ENCODE measurements at regions of chr21 and their contacts with region 1.

Region 1: GRCh38 chr21:21860888-21861287 is 862.7 kb downstream of the NCAM2 start:
- DNase-seq: no peak
- H3K4me3 ChIP-seq: no peak overlapping the region
- H3K27ac ChIP-seq: no peak overlapping the region
- H3K4me1 ChIP-seq: no peaks in the 10 kb centered on the region
- H3K27me3 ChIP-seq: no peaks in the 10 kb centered on the region
- CTCF ChIP-seq: no peak
- POLR2A ChIP-seq: no peak

Region 2: GRCh38 chr21:21631961-21632360 is 228.9 kb before region 1 on chr21:
- intact Hi-C with region 1: loop called (anchors 10 kb)
- DNase-seq: no peak
- H3K4me3 ChIP-seq: no peak overlapping the region
- H3K27ac ChIP-seq: no peak overlapping the region
- H3K4me1 ChIP-seq: no peaks in the 10 kb centered on the region
- H3K27me3 ChIP-seq: no peaks in the 10 kb centered on the region
- CTCF ChIP-seq: no peak
- POLR2A ChIP-seq: no peak

Region 3: GRCh38 chr21:21968810-21969209 is 107.9 kb after region 1 on chr21:
- intact Hi-C with region 1: no loop called
- DNase-seq: no peak
- H3K4me3 ChIP-seq: no peak overlapping the region
- H3K27ac ChIP-seq: no peak overlapping the region
- H3K4me1 ChIP-seq: no peaks in the 10 kb centered on the region
- H3K27me3 ChIP-seq: no peaks in the 10 kb centered on the region
- CTCF ChIP-seq: no peak
- POLR2A ChIP-seq: no peak

Measured in breast epithelium (tissue), 4 donors.